Caco-2 (cell line): ENCODE measurements at regions of chr2 and their contacts with region 1.

Region 1: DNA sequence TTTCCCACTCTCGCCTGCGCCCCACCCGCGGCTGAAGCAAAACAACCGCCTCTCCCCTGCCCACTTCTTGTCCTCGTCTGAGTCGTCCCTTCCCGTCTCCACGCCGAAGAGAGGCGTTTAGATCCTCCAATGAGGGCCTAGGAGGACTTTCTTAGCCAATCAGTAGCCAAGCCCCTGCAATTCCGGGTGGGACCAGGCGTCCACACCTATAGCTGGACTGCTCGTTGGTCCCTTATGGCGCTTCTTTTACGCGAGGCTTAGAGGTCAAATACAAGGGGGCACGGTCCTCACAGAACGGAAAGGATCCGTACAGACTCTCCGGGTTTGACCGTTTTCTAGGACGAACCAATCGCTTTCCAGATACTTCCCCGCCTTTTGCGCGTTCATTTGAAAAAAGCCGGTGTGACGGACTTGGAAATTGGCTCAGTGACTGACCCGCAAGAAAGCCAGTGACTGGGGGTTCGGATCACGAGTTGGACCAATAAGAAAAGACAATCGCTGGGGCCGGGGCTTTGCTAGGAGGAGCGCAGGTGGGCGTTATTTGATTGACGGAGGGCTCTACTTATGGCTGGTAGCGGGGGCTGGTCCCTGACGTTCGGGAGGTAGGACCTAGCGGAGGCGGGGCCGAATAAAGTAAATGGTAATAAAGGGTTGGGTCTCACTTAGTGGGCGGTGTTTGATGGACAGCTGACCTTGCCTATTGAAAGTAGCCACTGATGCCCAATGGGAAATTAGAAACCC is 565 bp upstream of the PPM1B start:
- DNase-seq: peak; percentile 99 to 100
- H3K4me3 ChIP-seq: peak overlapping the region; percentile 41
- H3K4me3 Mint-ChIP-seq: peak overlapping the region; percentile 97
- H3K27ac Mint-ChIP-seq: peak overlapping the region; percentile 98
- H3K4me1 ChIP-seq: peaks cover 6% of the 10 kb centered on the region; the same call in 1 of the 2 replicates
- H3K4me1 Mint-ChIP-seq: peaks cover 24% of the 10 kb centered on the region
- H3K27me3 ChIP-seq: no peaks in the 10 kb centered on the region
- H3K27me3 Mint-ChIP-seq: no peaks in the 10 kb centered on the region
- CTCF ChIP-seq: no peak

Region 2: GRCh38 chr2:42249887-42250286 is 1918.2 kb before region 1 on chr2:
- CTCF ChIA-PET with region 1: no interaction called
- POLR2A ChIA-PET with region 1: no interaction called
- intact Hi-C with region 1: no loop called
- DNase-seq: no peak
- H3K4me3 ChIP-seq: no peak overlapping the region
- H3K4me3 Mint-ChIP-seq: no peak overlapping the region
- H3K27ac Mint-ChIP-seq: no peak overlapping the region
- H3K4me1 ChIP-seq: no peaks in the 10 kb centered on the region
- H3K4me1 Mint-ChIP-seq: peaks cover 8% of the 10 kb centered on the region
- H3K27me3 ChIP-seq: no peaks in the 10 kb centered on the region
- H3K27me3 Mint-ChIP-seq: no peaks in the 10 kb centered on the region
- CTCF ChIP-seq: no peak

Region 3: GRCh38 chr2:44044281-44044720 is 123.8 kb before region 1 on chr2:
- CTCF ChIA-PET with region 1: interaction called, 6 read pairs
- POLR2A ChIA-PET with region 1: no interaction called
- intact Hi-C with region 1: loop called (anchors 2 kb)
- DNase-seq: peak; percentile 91
- H3K4me3 ChIP-seq: no peak overlapping the region
- H3K4me3 Mint-ChIP-seq: no peak overlapping the region
- H3K27ac Mint-ChIP-seq: no peak overlapping the region
- H3K4me1 ChIP-seq: no peaks in the 10 kb centered on the region
- H3K4me1 Mint-ChIP-seq: no peaks in the 10 kb centered on the region
- H3K27me3 ChIP-seq: no peaks in the 10 kb centered on the region
- H3K27me3 Mint-ChIP-seq: no peaks in the 10 kb centered on the region
- CTCF ChIP-seq: peak; percentile 95 to 98

Region 4: GRCh38 chr2:44110444-44110843 is 57.7 kb before region 1 on chr2:
- CTCF ChIA-PET with region 1: interaction called, 3 read pairs
- POLR2A ChIA-PET with region 1: interaction called, 4 read pairs
- intact Hi-C with region 1: loop called (anchors 2 kb)
- DNase-seq: peak; percentile 63 to 68
- H3K4me3 ChIP-seq: no peak overlapping the region
- H3K4me3 Mint-ChIP-seq: peak overlapping the region; percentile 18
- H3K27ac Mint-ChIP-seq: peak overlapping the region; percentile 73
- H3K4me1 ChIP-seq: peaks cover 43% of the 10 kb centered on the region
- H3K4me1 Mint-ChIP-seq: peaks cover 19% of the 10 kb centered on the region
- H3K27me3 ChIP-seq: no peaks in the 10 kb centered on the region
- H3K27me3 Mint-ChIP-seq: no peaks in the 10 kb centered on the region
- CTCF ChIP-seq: no peak

Region 5: GRCh38 chr2:44136186-44136585 is 31.9 kb before region 1 on chr2:
- CTCF ChIA-PET with region 1: interaction called, 4 read pairs
- POLR2A ChIA-PET with region 1: interaction called, 8 read pairs
- intact Hi-C with region 1: loop called (anchors 1 kb)
- DNase-seq: peak; percentile 67 to 74
- H3K4me3 ChIP-seq: no peak overlapping the region
- H3K4me3 Mint-ChIP-seq: peak overlapping the region; percentile 17
- H3K27ac Mint-ChIP-seq: peak overlapping the region; percentile 78
- H3K4me1 ChIP-seq: peaks cover 37% of the 10 kb centered on the region
- H3K4me1 Mint-ChIP-seq: peaks cover 22% of the 10 kb centered on the region
- H3K27me3 ChIP-seq: no peaks in the 10 kb centered on the region
- H3K27me3 Mint-ChIP-seq: no peaks in the 10 kb centered on the region
- CTCF ChIP-seq: no peak

Region 6: GRCh38 chr2:44148999-44149398 is 19.1 kb before region 1 on chr2:
- CTCF ChIA-PET with region 1: no interaction called
- POLR2A ChIA-PET with region 1: no interaction called
- intact Hi-C with region 1: no loop called
- DNase-seq: no peak
- H3K4me3 ChIP-seq: no peak overlapping the region
- H3K4me3 Mint-ChIP-seq: no peak overlapping the region
- H3K27ac Mint-ChIP-seq: no peak overlapping the region
- H3K4me1 ChIP-seq: no peaks in the 10 kb centered on the region; the same call in 1 of the 2 replicates
- H3K4me1 Mint-ChIP-seq: no peaks in the 10 kb centered on the region
- H3K27me3 ChIP-seq: no peaks in the 10 kb centered on the region
- H3K27me3 Mint-ChIP-seq: no peaks in the 10 kb centered on the region
- CTCF ChIP-seq: no peak

Region 7: DNA sequence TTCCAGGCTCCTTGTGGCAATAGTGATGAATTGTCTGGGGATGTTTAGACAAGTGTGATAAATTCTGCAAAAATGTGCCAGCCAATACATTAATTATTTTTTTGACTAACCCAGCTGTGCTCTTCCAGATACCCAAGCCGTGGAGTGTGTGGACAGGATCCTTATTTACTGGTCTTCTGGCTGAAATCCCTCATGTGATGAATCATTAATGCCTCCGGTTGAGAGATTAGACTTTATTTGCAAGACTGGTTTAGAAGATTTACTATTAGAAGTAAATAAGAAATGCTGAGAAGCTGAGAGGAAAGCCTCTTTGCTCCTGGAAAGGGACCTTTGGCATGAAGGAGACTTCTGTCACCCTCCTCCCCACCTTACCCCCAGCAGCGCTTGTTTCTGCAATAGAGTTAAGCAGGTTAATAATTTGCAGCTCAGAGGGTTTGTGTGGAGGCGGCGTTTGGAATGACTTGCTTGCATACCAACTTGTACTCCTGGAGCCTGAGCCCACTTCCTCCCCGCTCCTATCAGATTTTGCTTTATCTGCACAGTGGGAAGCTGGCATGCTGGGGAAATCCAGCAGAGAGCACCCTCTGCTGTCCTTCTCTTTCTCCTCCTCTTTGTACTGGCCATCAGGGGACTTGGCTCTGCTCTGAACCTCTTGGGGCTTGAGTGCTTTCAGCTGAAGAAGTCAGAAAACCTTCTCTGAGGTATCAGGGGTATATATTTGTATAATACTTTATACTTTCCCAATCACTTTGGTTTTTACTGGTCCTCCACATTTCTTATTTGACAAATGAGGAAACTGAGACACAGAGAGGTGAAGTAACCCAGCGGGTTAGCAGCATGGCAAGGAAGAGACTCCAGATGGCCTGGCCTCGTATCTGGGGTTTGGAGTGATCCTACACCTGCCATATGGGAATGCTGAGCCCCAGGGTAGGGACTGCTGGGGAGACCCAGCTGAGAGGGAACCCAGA is 123.5 kb after region 1 on chr2:
- CTCF ChIA-PET with region 1: interaction called, 6 read pairs
- POLR2A ChIA-PET with region 1: interaction called, 3 read pairs
- intact Hi-C with region 1: loop called (anchors 5 kb)
- DNase-seq: peak; percentile 92 to 97
- H3K4me3 ChIP-seq: 0 out of 2 replicates have a peak overlapping the region, but pooled peaks have one; percentile 5
- H3K4me3 Mint-ChIP-seq: peak overlapping the region; percentile 55
- H3K27ac Mint-ChIP-seq: peak overlapping the region; percentile 62
- H3K4me1 ChIP-seq: peaks cover 52% of the 10 kb centered on the region
- H3K4me1 Mint-ChIP-seq: peaks cover 45% of the 10 kb centered on the region
- H3K27me3 ChIP-seq: no peaks in the 10 kb centered on the region
- H3K27me3 Mint-ChIP-seq: no peaks in the 10 kb centered on the region
- CTCF ChIP-seq: peak; percentile 78 to 87

Region 8: DNA sequence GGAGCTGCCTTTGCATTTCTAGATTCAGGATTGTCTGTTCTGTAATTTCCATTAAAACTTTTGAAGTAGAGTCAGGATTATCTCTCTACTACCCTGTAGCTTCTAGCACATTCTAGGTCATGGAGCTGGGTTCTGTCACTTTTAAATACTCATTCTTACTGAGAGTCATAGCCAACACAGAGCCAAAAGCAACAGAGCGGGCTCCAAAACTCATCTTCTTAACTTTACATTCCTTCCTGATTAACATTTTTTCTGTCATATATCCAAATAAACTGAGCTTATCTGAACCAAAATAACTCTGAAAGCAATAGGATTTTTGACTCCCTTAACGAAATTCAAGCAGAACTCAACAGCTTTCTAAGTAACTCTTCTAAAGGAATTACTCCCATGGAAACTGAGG is 180.3 kb after region 1 on chr2:
- CTCF ChIA-PET with region 1: no interaction called
- POLR2A ChIA-PET with region 1: no interaction called
- intact Hi-C with region 1: no loop called
- DNase-seq: no peak
- H3K4me3 ChIP-seq: no peak overlapping the region
- H3K4me3 Mint-ChIP-seq: no peak overlapping the region
- H3K27ac Mint-ChIP-seq: no peak overlapping the region
- H3K4me1 ChIP-seq: no peaks in the 10 kb centered on the region
- H3K4me1 Mint-ChIP-seq: peaks cover 5% of the 10 kb centered on the region
- H3K27me3 ChIP-seq: no peaks in the 10 kb centered on the region
- H3K27me3 Mint-ChIP-seq: no peaks in the 10 kb centered on the region
- CTCF ChIP-seq: no peak